HCT116 (cell line): ENCODE measurements at regions of chr12 and their contacts with region 1.

Region 1: GRCh38 chr12:97148941-97149559 is 242.0 kb downstream of the NEDD1 start:
- DNase-seq: peak; percentile 29
- ATAC-seq: peak; percentile 100
- H3K4me3 ChIP-seq: no peak overlapping the region
- H3K27ac ChIP-seq: no peak overlapping the region
- H3K4me1 ChIP-seq: no peaks in the 10 kb centered on the region
- H3K27me3 ChIP-seq: peaks cover 27% of the 10 kb centered on the region
- CTCF ChIP-seq: peak; percentile 47 to 91 (median 89); a peak in 5 of 6 replicates
- POLR2A ChIP-seq: no peak
- RAD21 ChIP-seq: peak; percentile 70

Region 2: DNA sequence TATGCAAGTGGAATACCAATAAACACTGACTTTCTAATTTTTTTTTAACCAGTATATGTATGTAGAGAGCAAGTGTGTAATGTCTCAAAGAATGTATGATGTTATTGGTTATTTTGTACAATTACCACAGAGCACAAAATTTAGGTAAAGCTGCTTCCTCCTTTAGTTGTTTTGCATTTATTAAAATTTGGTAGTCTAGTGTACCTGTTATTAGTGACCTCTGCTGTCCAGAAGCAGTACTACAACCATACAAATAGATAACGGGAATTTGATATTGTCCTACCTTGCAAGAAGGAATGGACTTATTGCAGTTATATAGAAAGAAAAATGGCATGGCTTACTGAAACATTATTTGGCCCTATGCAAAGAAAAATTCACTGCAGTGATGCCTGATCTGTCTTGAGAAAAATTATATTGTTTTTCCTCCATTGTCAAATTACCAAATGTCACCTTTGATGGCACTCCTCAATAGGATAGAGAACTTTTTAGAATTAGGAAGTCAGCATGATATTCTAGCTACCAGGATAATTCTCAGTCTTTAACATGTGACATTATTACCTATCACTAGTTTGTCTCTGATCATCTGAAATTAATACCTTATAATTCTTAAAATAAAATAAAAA is 159.6 kb after region 1 on chr12:
- CTCF ChIA-PET with region 1: interaction called, 3 read pairs
- POLR2A ChIA-PET with region 1: no interaction called
- RAD21 ChIA-PET with region 1: no interaction called
- intact Hi-C with region 1: loop called (anchors 1 kb)
- DNase-seq: peak; percentile 46
- ATAC-seq: no peak
- H3K4me3 ChIP-seq: no peak overlapping the region
- H3K27ac ChIP-seq: no peak overlapping the region
- H3K4me1 ChIP-seq: no peaks in the 10 kb centered on the region
- H3K27me3 ChIP-seq: peaks cover 19% of the 10 kb centered on the region; the same call in 1 of the 2 replicates
- CTCF ChIP-seq: peak; percentile 46 to 72 (median 62); a peak in 5 of 6 replicates
- POLR2A ChIP-seq: no peak
- RAD21 ChIP-seq: peak; percentile 51

Region 3: GRCh38 chr12:97404543-97404942 is 255.5 kb after region 1 on chr12:
- CTCF ChIA-PET with region 1: interaction called, 9 read pairs
- POLR2A ChIA-PET with region 1: no interaction called
- RAD21 ChIA-PET with region 1: no interaction called
- intact Hi-C with region 1: loop called (anchors 2 kb)
- DNase-seq: peak; percentile 10
- ATAC-seq: peak; percentile 69; the same call in 1 of the 2 replicates
- H3K4me3 ChIP-seq: no peak overlapping the region
- H3K27ac ChIP-seq: no peak overlapping the region
- H3K4me1 ChIP-seq: no peaks in the 10 kb centered on the region
- H3K27me3 ChIP-seq: no peaks in the 10 kb centered on the region
- CTCF ChIP-seq: peak; percentile 30 to 74 (median 71); a peak in 5 of 6 replicates
- POLR2A ChIP-seq: no peak
- RAD21 ChIP-seq: peak; percentile 57

Region 4: DNA sequence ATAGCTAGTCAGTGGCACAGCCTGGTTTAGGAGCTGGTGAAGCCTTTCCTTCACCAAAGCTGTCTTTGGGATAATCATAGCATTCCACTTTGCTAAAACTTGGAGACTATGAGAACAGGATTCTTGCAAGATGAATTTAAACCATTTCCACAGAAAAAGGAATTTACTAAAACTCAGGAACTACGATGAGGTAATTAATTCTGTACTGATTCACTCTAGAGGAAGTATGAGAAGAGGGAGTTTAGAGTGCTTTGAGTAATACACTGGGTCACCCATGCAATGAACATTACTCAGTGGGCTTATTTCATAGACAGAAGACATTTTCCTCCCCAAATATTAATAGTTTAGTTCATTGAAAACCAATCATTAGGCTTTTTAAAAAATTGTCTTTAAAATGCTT is 386.5 kb after region 1 on chr12:
- CTCF ChIA-PET with region 1: no interaction called
- POLR2A ChIA-PET with region 1: no interaction called
- RAD21 ChIA-PET with region 1: no interaction called
- intact Hi-C with region 1: no loop called
- DNase-seq: no peak
- ATAC-seq: no peak
- H3K4me3 ChIP-seq: no peak overlapping the region
- H3K27ac ChIP-seq: no peak overlapping the region
- H3K4me1 ChIP-seq: no peaks in the 10 kb centered on the region
- H3K27me3 ChIP-seq: no peaks in the 10 kb centered on the region
- CTCF ChIP-seq: no peak
- POLR2A ChIP-seq: no peak
- RAD21 ChIP-seq: no peak

Region 5: DNA sequence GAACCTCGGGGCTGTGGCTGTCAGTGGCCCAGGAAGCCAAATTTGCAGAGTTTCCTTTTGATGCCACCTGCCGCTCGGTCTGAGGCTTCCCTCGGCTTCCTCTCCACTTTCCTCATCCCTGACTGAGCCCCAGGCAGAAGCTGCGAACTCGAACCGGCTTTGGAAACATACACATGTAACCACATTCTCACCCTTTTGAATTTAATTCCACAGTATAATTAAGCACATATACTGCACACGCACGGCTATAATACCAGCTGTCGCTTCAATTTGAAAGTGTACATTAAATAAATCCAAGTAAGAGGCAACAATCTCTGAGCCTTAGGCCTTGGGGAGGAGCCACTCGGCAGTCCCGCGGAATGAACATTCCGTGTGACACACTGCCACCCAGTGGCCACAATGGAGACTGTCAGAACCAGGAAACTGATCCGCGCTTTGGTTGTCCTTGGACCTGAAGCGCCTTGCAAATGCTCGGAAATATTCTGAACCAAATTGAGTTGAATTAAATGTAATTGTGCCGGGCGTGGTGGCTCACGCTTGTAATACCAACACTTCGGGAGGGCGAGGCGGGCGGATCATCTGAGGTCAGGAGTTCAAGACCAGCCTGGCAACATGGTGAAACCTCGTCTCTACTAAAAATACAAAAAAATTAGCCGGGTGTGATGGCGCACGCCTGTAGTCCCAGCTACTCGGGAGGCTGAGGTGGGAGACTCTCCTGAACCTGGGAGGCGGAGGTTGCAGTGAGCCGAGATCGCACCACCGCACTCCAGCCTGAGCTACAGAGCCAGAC is 1248.5 kb after region 1 on chr12:
- CTCF ChIA-PET with region 1: no interaction called
- POLR2A ChIA-PET with region 1: no interaction called
- RAD21 ChIA-PET with region 1: no interaction called
- intact Hi-C with region 1: loop called (anchors 2 kb)
- DNase-seq: peak; percentile 80
- ATAC-seq: peak; percentile 72
- H3K4me3 ChIP-seq: peak overlapping the region; percentile 14 to 52
- H3K27ac ChIP-seq: peak overlapping the region; percentile 51
- H3K4me1 ChIP-seq: peaks cover 48 to 57% of the 10 kb centered on the region in 2 experiments
- H3K27me3 ChIP-seq: no peaks in the 10 kb centered on the region
- CTCF ChIP-seq: peak; percentile 81 to 91 (median 88)
- POLR2A ChIP-seq: no peak
- RAD21 ChIP-seq: peak; percentile 90